Pancreas (tissue), 10 donors: ENCODE measurements at regions of chrX and their contacts with region 1.

Region 1: DNA sequence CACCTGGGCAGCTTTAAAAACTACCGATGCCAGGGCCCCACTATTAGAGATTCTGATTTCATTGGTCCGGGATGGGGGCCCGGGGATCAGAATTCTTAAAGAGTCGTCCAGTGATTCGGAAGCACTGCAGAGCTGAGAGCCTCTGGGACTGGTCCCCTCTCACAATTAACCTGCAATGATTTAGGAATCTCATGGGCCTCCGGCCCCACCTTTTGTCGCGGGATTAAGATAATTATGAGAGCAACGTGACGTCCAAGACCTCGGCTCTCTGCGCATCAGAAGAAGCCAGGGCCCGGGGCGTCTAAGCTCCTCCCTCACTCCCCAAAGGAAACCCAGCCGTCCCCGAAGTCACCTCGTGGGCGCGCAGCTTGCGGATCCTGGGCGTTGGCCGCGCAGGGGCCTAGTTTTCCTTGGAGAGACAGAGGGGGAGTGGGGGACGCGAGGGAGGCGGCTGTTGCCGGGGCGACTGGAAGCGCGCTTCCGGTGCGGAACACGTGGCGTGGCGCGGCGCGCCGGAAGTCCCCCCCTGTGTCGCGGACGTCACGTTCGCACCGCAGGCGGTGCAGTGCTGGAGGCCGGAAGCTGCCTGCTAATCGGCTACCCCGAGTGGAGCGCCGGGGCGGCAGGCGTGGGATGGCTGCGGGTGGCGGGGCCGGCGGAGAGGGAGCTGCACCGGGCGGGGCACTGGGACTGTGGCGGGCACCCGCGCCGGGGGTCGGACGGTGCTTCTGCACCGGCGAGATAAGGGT is at the start of gene GEMIN8:
- DNase-seq: peak; percentile 84 to 95 (median 88)
- ATAC-seq: peak; percentile 97 to 99 (median 98)
- H3K4me3 ChIP-seq: peak within 1 kb of the TSS; percentile 59 to 82 (median 66)
- H3K27ac ChIP-seq: peak within 1 kb of the TSS; percentile 63 to 85 (median 78)
- H3K4me1 ChIP-seq: peaks cover 6 to 13% (median 10%) of the 10 kb centered on the region in 3 donors
- H3K27me3 ChIP-seq: peaks cover 0 to 3% (median 0%) of the 10 kb centered on the region in 4 donors
- CTCF ChIP-seq: no peak
- total RNA-seq, gene GEMIN8: 8.8 to 16.8 (median 11.1) TPM

Region 2: GRCh38 chrX:13506574-13506973 is 523.0 kb before region 1 on chrX:
- intact Hi-C with region 1: loop called in 1 of 3 experiments (anchors 10 kb)
- DNase-seq: peak in 3 of 6 donors; percentile 40 to 65 (median 45)
- ATAC-seq: peak in 1 of 4 donors; percentile 44
- H3K4me3 ChIP-seq: no peak overlapping the region
- H3K27ac ChIP-seq: no peak overlapping the region
- H3K4me1 ChIP-seq: no peaks in the 10 kb centered on the region
- H3K27me3 ChIP-seq: peaks cover 0 to 8% (median 0%) of the 10 kb centered on the region in 4 donors
- CTCF ChIP-seq: peak; percentile 42 to 72 (median 60)

Region 3: GRCh38 chrX:13662355-13662791 is 367.2 kb before region 1 on chrX:
- intact Hi-C with region 1: loop called in 2 of 3 experiments (anchors 5 to 10 kb)
- DNase-seq: no peak
- ATAC-seq: peak in 2 of 4 donors; percentile 14 to 21
- H3K4me3 ChIP-seq: no peak overlapping the region
- H3K27ac ChIP-seq: no peak overlapping the region
- H3K4me1 ChIP-seq: peaks cover 0 to 4% (median 0%) of the 10 kb centered on the region in 3 donors
- H3K27me3 ChIP-seq: no peaks in the 10 kb centered on the region
- CTCF ChIP-seq: no peak

Region 4: GRCh38 chrX:13669246-13669737 is 360.3 kb before region 1 on chrX:
- intact Hi-C with region 1: loop called in 2 of 3 experiments (anchors 5 to 10 kb)
- DNase-seq: peak; percentile 65 to 90 (median 84)
- ATAC-seq: peak; percentile 94 to 97 (median 96)
- H3K4me3 ChIP-seq: no peak overlapping the region
- H3K27ac ChIP-seq: peak overlapping the region; percentile 19 to 77 (median 52)
- H3K4me1 ChIP-seq: peaks cover 4 to 18% (median 13%) of the 10 kb centered on the region in 3 donors
- H3K27me3 ChIP-seq: peaks cover 0 to 4% (median 0%) of the 10 kb centered on the region in 4 donors
- CTCF ChIP-seq: no peak